CD8-positive, alpha-beta T cell (primary cell): ENCODE measurements at regions of chr9 and their contacts with region 1.

Region 1: DNA sequence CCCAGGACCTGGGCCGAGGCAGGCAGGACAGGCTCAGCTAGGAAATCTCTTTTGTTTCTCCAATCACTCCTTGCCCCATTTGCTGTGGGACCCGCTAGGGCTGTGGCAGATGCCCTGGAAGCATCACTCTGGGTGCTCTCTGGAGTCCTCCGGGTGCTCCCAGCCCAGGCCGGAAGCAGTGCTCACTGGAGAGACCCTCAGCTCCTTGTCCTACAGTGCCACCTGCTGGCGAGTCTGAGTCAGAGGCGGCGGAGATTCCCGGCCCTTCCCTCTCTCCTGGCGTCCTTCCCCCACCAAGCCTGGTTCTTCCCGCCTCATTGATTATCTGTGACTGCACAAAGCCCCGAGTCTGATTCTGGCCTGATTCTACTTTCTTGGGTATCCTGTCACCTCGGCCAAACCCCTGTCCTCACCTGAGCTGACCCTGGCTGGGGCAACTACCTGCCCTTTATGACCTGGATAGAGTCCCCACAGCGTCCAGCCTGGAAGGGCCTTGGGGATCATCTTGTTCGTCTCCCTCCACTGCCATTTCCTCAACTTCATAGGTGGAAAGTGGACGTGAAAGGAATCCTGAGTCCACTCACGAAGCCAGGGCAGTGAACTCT is 7.3 kb upstream of the BARHL1 start:
- DNase-seq: peak in 8 of 9 experiments; percentile 12 to 71 (median 50)
- ATAC-seq: peak; percentile 68
- H3K4me3 ChIP-seq: no peak overlapping the region
- H3K4me3 Mint-ChIP-seq: no peak overlapping the region
- H3K27ac ChIP-seq: no peak overlapping the region
- H3K27ac Mint-ChIP-seq: no peak overlapping the region
- H3K4me1 ChIP-seq: no peaks in the 10 kb centered on the region
- H3K4me1 Mint-ChIP-seq: peaks cover 2% of the 10 kb centered on the region
- H3K27me3 ChIP-seq: peaks cover 25 to 30% of the 10 kb centered on the region in 2 experiments
- H3K27me3 Mint-ChIP-seq: peaks cover 51% of the 10 kb centered on the region
- CTCF ChIP-seq: peak; percentile 61

Region 2: DNA sequence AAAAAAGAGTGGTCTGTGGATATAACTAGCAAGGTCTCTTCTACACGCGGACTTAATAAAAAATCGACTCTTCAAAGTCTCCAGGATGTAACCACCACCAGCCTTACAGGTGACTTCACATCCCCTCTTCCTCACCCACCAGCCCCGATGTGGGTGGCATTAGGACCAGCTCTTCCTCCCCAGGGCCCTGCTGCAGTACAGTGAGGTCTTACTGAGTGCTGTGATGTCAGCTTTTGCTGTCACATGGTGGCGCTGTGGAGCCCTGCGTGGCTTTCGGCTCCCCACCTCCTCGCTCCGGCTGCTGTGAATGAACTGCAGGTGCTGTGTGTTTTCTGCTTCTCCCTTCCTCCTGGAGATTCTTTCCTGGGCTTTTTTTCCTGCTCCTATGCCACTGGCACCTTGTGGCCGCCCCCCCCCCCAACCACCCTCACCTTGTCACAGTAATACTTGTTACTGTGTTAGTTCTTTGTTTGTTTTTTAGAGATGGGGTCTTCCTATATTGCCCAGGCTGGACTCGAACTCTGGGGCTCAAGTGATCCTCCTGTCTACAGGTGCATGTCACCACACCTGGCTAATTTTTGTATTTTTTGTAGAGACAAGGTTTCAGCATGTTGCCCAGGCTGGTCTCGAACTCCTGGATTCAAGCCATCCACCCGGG is 819.4 kb before region 1 on chr9:
- CTCF ChIA-PET with region 1: interaction called, 4 read pairs
- POLR2A ChIA-PET with region 1: no interaction called
- intact Hi-C with region 1: loop called in 1 of 2 experiments (anchors 2 kb)
- DNase-seq: peak; percentile 73 to 91 (median 89)
- ATAC-seq: peak; percentile 100
- H3K4me3 ChIP-seq: no peak overlapping the region
- H3K4me3 Mint-ChIP-seq: no peak overlapping the region
- H3K27ac ChIP-seq: no peak overlapping the region
- H3K27ac Mint-ChIP-seq: no peak overlapping the region
- H3K4me1 ChIP-seq: peaks cover 7% of the 10 kb centered on the region
- H3K4me1 Mint-ChIP-seq: peaks cover 6% of the 10 kb centered on the region
- H3K27me3 ChIP-seq: no peaks in the 10 kb centered on the region
- H3K27me3 Mint-ChIP-seq: peaks cover 6% of the 10 kb centered on the region
- CTCF ChIP-seq: peak; percentile 87

Region 3: DNA sequence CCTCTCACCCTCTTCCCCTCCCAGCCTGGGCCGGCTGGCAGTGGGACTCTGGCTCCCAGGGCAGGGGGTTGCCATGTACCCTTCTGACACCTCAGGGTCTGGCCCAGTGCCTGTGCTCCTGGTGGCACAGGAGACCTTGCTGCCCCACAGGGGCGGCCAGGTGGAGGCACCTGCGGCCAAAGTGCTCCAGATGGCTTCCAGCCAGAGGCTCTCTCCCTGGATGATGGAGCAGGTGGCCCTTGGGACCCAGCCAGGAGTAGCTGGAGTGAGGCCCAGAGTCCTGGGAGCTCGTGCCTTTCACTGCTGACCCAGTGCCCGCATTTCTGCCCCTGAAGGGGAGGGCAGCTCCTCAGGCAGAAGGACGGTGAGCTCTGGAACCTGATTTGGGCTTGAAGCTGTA is 326.0 kb before region 1 on chr9:
- CTCF ChIA-PET with region 1: no interaction called
- POLR2A ChIA-PET with region 1: no interaction called
- intact Hi-C with region 1: loop called in 1 of 2 experiments (anchors 10 kb)
- DNase-seq: no peak
- ATAC-seq: no peak
- H3K4me3 ChIP-seq: no peak overlapping the region
- H3K4me3 Mint-ChIP-seq: no peak overlapping the region
- H3K27ac ChIP-seq: no peak overlapping the region
- H3K27ac Mint-ChIP-seq: no peak overlapping the region
- H3K4me1 ChIP-seq: no peaks in the 10 kb centered on the region
- H3K4me1 Mint-ChIP-seq: peaks cover 5% of the 10 kb centered on the region
- H3K27me3 ChIP-seq: peaks cover 0 to 3% of the 10 kb centered on the region in 2 experiments
- H3K27me3 Mint-ChIP-seq: peaks cover 5% of the 10 kb centered on the region
- CTCF ChIP-seq: no peak

Region 4: GRCh38 chr9:132268725-132269352 is 306.3 kb before region 1 on chr9:
- CTCF ChIA-PET with region 1: no interaction called
- POLR2A ChIA-PET with region 1: no interaction called
- intact Hi-C with region 1: loop called in 1 of 2 experiments (anchors 10 kb)
- DNase-seq: peak; percentile 50 to 79 (median 71)
- ATAC-seq: peak; percentile 78
- H3K4me3 ChIP-seq: no peak overlapping the region
- H3K4me3 Mint-ChIP-seq: no peak overlapping the region
- H3K27ac ChIP-seq: no peak overlapping the region
- H3K27ac Mint-ChIP-seq: peak overlapping the region; percentile 38
- H3K4me1 ChIP-seq: no peaks in the 10 kb centered on the region
- H3K4me1 Mint-ChIP-seq: peaks cover 3% of the 10 kb centered on the region
- H3K27me3 ChIP-seq: no peaks in the 10 kb centered on the region
- H3K27me3 Mint-ChIP-seq: no peaks in the 10 kb centered on the region
- CTCF ChIP-seq: peak; percentile 95

Region 5: GRCh38 chr9:132507746-132508469 is 67.2 kb before region 1 on chr9:
- CTCF ChIA-PET with region 1: interaction called, 16 read pairs
- POLR2A ChIA-PET with region 1: no interaction called
- intact Hi-C with region 1: loop called (anchors 5 to 10 kb)
- DNase-seq: peak; percentile 33 to 79 (median 70)
- ATAC-seq: peak; percentile 58
- H3K4me3 ChIP-seq: no peak overlapping the region
- H3K4me3 Mint-ChIP-seq: no peak overlapping the region
- H3K27ac ChIP-seq: no peak overlapping the region
- H3K27ac Mint-ChIP-seq: no peak overlapping the region
- H3K4me1 ChIP-seq: peaks cover 11% of the 10 kb centered on the region
- H3K4me1 Mint-ChIP-seq: peaks cover 10% of the 10 kb centered on the region
- H3K27me3 ChIP-seq: peaks cover 2% of the 10 kb centered on the region in 2 experiments
- H3K27me3 Mint-ChIP-seq: peaks cover 13% of the 10 kb centered on the region
- CTCF ChIP-seq: peak; percentile 74

Region 6: DNA sequence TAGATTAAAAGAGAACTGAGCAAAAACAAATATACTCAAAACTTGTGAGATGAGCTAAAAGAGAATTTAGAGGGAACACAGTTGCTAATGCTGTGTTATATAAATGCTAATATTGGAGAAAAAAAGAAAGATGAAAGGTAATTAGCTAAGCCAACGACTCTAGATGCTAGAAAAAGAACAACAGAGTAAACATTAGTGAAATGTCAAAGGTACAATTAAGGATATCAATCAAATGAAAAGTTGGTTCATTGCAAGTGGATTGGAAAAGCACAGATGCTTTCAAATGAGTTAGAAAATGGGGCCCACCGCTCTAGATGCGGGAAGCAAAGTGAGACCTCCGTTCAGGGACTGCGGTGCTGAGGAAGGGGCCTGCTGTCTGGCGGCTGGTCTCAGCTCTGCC is 10.6 kb before region 1 on chr9:
- CTCF ChIA-PET with region 1: interaction called, 11 read pairs
- POLR2A ChIA-PET with region 1: no interaction called
- intact Hi-C with region 1: no loop called
- DNase-seq: no peak
- ATAC-seq: no peak
- H3K4me3 ChIP-seq: no peak overlapping the region
- H3K4me3 Mint-ChIP-seq: no peak overlapping the region
- H3K27ac ChIP-seq: no peak overlapping the region
- H3K27ac Mint-ChIP-seq: no peak overlapping the region
- H3K4me1 ChIP-seq: no peaks in the 10 kb centered on the region
- H3K4me1 Mint-ChIP-seq: no peaks in the 10 kb centered on the region
- H3K27me3 ChIP-seq: no peaks in the 10 kb centered on the region
- H3K27me3 Mint-ChIP-seq: peaks cover 22% of the 10 kb centered on the region
- CTCF ChIP-seq: no peak